ENCODE measurements at regions of chr1 and their contacts with region 1.

Region 1: GRCh38 chr1:71548398-71548890 is 467.6 kb upstream of the ZRANB2 start:
- DNase-seq: no peak
- H3K4me3 ChIP-seq: no peak overlapping the region
- H3K27ac ChIP-seq: no peak overlapping the region
- H3K27me3 ChIP-seq: no peaks in the 10 kb centered on the region
- CTCF ChIP-seq: no peak

Region 2: GRCh38 chr1:71533950-71534349 is 14.5 kb before region 1 on chr1:
- CTCF ChIA-PET with region 1: no interaction called
- POLR2A ChIA-PET with region 1: no interaction called
- DNase-seq: no peak
- H3K4me3 ChIP-seq: no peak overlapping the region
- H3K27ac ChIP-seq: no peak overlapping the region
- H3K27me3 ChIP-seq: no peaks in the 10 kb centered on the region
- CTCF ChIP-seq: no peak

Region 3: GRCh38 chr1:71561729-71562128 is 13.3 kb after region 1 on chr1:
- CTCF ChIA-PET with region 1: interaction called, 12 read pairs
- POLR2A ChIA-PET with region 1: no interaction called
- DNase-seq: peak; percentile 58
- H3K4me3 ChIP-seq: no peak overlapping the region
- H3K27ac ChIP-seq: no peak overlapping the region
- H3K27me3 ChIP-seq: no peaks in the 10 kb centered on the region
- CTCF ChIP-seq: no peak